Activated naive CD4-positive, alpha-beta T cell treated with anti-CD3 and anti-CD28 coated beads for 36 hours (primary cell): ENCODE measurements at regions of chrX and their contacts with region 1.

Region 1: DNA sequence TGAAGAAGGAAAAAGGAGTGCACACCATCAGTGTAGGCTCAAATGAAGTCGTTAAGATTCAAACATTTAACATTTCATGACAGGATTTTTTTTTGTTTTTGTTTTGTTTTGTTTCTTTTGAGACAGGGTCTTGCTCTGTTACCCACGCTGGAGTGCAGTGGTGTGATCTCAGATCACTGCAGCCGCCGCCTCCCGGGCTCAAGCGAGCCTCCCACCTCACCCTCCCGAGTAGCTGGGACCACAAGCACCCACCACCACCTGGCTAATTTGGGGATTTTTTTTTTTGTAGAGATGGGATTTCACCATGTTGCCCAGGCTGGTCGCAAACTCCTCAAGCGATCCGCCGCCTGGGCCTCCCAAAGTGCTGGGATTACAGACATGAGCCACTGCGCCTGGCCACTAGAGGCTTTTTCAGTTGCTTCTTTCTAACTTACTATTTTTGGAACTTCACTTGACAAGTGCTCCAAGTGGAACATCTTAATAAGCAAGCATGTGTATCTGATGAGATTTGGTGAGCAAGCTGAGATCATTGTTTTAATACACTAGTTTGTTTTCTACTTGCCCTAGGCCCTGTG is 78.9 kb upstream of the CNKSR2 start:
- DNase-seq: no peak
- H3K4me3 Mint-ChIP-seq: no peak overlapping the region
- H3K27ac Mint-ChIP-seq: no peak overlapping the region
- H3K4me1 Mint-ChIP-seq: no peaks in the 10 kb centered on the region
- H3K27me3 Mint-ChIP-seq: no peaks in the 10 kb centered on the region

Region 2: DNA sequence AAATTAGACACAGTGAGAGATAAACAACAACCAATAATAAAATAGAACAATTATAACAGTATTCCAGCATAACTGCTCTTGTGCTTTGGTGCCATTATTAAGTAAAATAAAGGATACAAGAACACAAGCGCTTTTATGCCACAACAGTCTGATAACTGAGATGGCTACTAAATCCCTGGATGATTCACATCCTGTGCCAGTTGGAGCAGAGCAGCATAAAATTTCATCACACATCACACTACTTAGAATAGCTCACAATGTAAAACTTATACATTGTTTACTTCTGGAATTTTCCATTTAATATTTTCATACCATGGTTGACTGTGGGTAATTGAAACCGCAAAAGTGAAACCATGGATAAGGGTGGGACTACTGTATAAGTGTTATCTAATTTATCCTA is 321.0 kb before region 1 on chrX:
- CTCF ChIA-PET with region 1: no interaction called
- intact Hi-C with region 1: loop called (anchors 5 kb)
- DNase-seq: no peak
- H3K4me3 Mint-ChIP-seq: no peak overlapping the region
- H3K27ac Mint-ChIP-seq: no peak overlapping the region
- H3K4me1 Mint-ChIP-seq: no peaks in the 10 kb centered on the region
- H3K27me3 Mint-ChIP-seq: no peaks in the 10 kb centered on the region

Region 3: GRCh38 chrX:21412883-21413282 is 117.5 kb after region 1 on chrX:
- CTCF ChIA-PET with region 1: no interaction called
- intact Hi-C with region 1: no loop called
- DNase-seq: no peak
- H3K4me3 Mint-ChIP-seq: no peak overlapping the region
- H3K27ac Mint-ChIP-seq: no peak overlapping the region
- H3K4me1 Mint-ChIP-seq: peaks cover 9% of the 10 kb centered on the region
- H3K27me3 Mint-ChIP-seq: no peaks in the 10 kb centered on the region

Region 4: DNA sequence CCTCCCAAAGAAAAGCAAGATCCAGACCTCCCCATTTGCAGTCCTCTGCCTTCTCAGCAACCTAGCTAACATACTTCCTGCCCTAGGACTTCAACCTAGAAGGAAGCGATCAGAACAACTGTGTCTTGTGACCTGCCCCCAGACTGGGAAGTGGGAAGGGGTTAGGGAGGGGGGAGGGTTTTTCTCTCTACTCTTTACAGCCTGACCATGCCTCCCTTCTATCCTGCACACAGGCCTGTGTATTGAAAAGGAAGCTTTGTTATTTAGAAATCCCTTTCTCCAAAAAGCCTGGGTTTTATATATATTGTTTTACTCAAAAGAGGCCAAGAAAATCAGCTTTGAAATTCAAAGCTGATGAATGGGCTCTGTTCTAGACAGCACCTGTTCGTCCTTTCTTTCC is 609.9 kb after region 1 on chrX:
- CTCF ChIA-PET with region 1: no interaction called
- intact Hi-C with region 1: no loop called
- DNase-seq: no peak
- H3K4me3 Mint-ChIP-seq: no peak overlapping the region
- H3K27ac Mint-ChIP-seq: no peak overlapping the region
- H3K4me1 Mint-ChIP-seq: no peaks in the 10 kb centered on the region
- H3K27me3 Mint-ChIP-seq: no peaks in the 10 kb centered on the region